H1 (cell line): ENCODE measurements at regions of chr11 and their contacts with region 1.

Region 1: DNA sequence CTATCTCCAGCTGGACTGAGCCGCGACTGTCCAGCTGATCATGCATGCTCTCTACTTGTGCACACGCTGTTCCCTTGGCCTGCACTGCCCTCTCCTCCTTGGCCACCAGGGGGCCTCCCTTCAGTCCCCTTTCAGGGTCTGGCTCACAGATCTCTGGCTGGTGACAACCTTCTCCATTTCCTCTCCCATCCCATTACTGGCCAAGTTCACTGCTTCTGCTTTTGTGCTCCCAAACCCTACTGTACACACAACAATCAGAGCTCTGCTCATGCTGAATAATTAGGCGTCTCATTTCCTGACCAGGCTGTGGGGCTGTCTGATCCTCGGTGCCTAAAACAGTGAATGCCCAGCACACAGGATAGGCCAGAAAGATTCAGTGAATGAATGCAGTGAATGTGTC is 224.0 kb upstream of the NARS2 start:
- DNase-seq: peak; percentile 34 to 86
- H3K4me3 ChIP-seq: no peak overlapping the region
- H3K27ac ChIP-seq: no peak overlapping the region
- H3K4me1 ChIP-seq: peaks cover 0 to 17% (median 10%) of the 10 kb centered on the region in 4 experiments; a peak in 5 of 7 replicates
- H3K27me3 ChIP-seq: no peaks in the 10 kb centered on the region
- CTCF ChIP-seq: peak; percentile 81 to 97 (median 95)
- EP300 ChIP-seq: no peak
- POLR2A ChIP-seq: no peak
- RAD21 ChIP-seq: peak; percentile 76 to 86

Region 2: DNA sequence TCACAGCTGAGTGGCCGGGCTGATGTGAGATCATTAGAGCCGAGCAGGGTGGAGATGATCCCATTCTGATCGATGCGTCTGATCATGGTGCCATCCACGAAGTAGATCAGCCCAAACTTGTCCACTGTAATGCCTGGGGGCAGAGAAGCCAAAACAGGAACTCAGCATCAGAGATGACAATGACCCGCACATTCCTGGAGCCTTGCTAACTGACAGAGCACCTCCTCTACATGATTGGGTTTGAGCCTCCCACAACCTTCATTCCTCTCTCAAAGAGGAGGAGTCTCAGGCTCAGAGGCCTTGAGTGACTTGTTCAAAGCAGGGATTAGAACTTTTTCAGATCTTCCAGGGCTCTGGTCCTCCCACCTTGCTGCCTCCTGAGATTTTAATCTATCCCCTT is 90.3 kb before region 1 on chr11:
- CTCF ChIA-PET with region 1: interaction called, 10 read pairs
- POLR2A ChIA-PET with region 1: no interaction called
- DNase-seq: no peak
- H3K4me3 ChIP-seq: no peak overlapping the region
- H3K27ac ChIP-seq: no peak overlapping the region
- H3K4me1 ChIP-seq: no peaks in the 10 kb centered on the region
- H3K27me3 ChIP-seq: no peaks in the 10 kb centered on the region
- CTCF ChIP-seq: no peak
- EP300 ChIP-seq: no peak
- POLR2A ChIP-seq: no peak
- RAD21 ChIP-seq: no peak

Region 3: DNA sequence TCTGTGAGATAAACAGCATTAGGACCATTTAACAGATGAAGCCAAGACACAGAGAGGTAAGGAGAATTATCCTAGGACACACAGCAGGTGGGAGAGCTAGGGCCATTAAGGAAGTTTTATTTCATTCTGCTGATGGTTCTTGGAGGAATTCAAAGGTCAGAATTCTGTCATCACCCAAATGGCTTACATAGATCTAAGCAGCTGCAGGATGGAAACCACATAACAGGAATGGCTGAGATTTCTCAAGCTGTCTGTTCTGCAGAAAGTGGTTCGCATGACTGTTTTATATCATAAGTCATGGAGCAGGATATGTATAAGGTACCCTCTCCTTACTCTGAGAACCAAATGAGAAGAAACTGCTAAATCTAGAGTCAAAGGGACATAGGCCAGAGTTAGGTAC is 60.8 kb before region 1 on chr11:
- CTCF ChIA-PET with region 1: interaction called, 11 read pairs
- POLR2A ChIA-PET with region 1: no interaction called
- DNase-seq: no peak
- H3K4me3 ChIP-seq: no peak overlapping the region
- H3K27ac ChIP-seq: no peak overlapping the region
- H3K4me1 ChIP-seq: no peaks in the 10 kb centered on the region
- H3K27me3 ChIP-seq: no peaks in the 10 kb centered on the region
- CTCF ChIP-seq: no peak
- EP300 ChIP-seq: no peak
- POLR2A ChIP-seq: no peak
- RAD21 ChIP-seq: no peak

Region 4: GRCh38 chr11:78784321-78785061 is 14.2 kb before region 1 on chr11:
- CTCF ChIA-PET with region 1: interaction called, 28 read pairs
- POLR2A ChIA-PET with region 1: no interaction called
- DNase-seq: no peak
- H3K4me3 ChIP-seq: no peak overlapping the region
- H3K27ac ChIP-seq: no peak overlapping the region
- H3K4me1 ChIP-seq: peaks cover 0 to 2% (median 0%) of the 10 kb centered on the region in 4 experiments; a peak in 1 of 7 replicates
- H3K27me3 ChIP-seq: no peaks in the 10 kb centered on the region
- CTCF ChIP-seq: no peak
- EP300 ChIP-seq: no peak
- POLR2A ChIP-seq: no peak
- RAD21 ChIP-seq: no peak

Region 5: DNA sequence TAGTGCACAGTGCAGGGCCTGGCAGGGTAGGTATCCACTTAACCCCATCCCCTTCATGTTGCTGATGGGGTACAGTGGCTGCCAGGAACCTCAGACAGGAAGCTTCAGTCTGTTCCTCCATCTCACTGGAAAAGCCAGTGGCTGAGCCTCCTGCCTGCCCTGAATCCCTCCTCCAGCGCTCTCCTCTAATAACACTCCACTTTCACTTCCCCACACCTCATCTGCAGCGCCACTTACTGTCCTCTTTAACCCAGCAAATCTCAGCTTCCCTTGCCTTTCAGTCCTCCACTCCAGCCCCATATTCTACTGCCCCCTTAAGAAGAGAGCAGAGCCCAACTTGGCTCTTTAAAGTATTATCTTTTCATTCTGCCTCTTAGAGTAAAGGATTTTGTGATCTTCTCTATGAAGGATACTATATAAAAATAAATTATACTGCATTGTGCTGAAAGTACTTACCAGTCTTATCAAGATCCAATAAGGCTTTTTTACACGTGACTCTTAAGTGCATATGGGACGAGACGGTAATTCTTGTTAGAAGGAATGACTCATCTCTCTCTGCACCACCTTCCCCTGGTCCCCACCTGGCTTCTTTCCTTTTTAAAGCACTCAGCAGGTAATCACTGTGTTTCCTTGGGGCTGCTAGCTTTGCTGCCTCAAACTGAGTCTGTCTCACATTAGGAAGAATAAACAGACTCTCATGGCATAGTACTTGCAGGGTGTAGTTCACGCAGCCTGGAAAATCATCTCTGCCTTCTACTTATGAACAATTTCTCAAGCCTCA is 14.0 kb after region 1 on chr11:
- CTCF ChIA-PET with region 1: interaction called, 100 read pairs
- POLR2A ChIA-PET with region 1: interaction called, 3 read pairs
- DNase-seq: no peak
- H3K4me3 ChIP-seq: peak overlapping the region in 1 of 4 experiments; percentile 21; a peak in 1 of 8 replicates
- H3K27ac ChIP-seq: no peak overlapping the region
- H3K4me1 ChIP-seq: peaks cover 5 to 21% (median 10%) of the 10 kb centered on the region in 4 experiments; a peak in 6 of 7 replicates
- H3K27me3 ChIP-seq: peaks cover 0 to 2% (median 0%) of the 10 kb centered on the region in 4 experiments; a peak in 1 of 7 replicates
- CTCF ChIP-seq: no peak; a peak in 1 of 4 replicates
- EP300 ChIP-seq: no peak
- POLR2A ChIP-seq: no peak
- RAD21 ChIP-seq: peak; percentile 10 to 25; a peak in 3 of 4 replicates

Region 6: GRCh38 chr11:78825591-78826020 is 26.9 kb after region 1 on chr11:
- CTCF ChIA-PET with region 1: interaction called, 25 read pairs
- POLR2A ChIA-PET with region 1: no interaction called
- DNase-seq: no peak
- H3K4me3 ChIP-seq: no peak overlapping the region
- H3K27ac ChIP-seq: no peak overlapping the region
- H3K4me1 ChIP-seq: peaks cover 0 to 5% (median 2%) of the 10 kb centered on the region in 4 experiments; a peak in 2 of 7 replicates
- H3K27me3 ChIP-seq: no peaks in the 10 kb centered on the region
- CTCF ChIP-seq: no peak
- EP300 ChIP-seq: no peak
- POLR2A ChIP-seq: no peak
- RAD21 ChIP-seq: no peak

Region 7: DNA sequence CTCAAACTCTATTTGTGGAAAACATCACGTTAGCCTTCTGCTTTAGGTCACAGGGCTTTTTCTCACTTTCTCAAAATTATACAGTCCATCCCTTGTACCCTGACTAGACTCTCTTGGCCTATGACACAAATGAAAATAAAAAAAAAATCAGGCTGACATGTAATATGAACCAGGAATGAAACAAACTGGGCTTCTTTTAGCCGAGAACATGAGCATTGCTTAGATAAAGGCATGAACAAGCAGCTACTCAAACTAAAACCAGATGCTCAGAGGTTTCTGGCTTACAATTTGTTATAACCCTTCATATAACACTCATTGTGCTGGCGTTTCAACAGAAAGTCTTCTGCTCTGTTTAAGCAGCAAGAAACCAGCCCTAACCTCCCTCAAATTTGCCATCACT is 41.5 kb after region 1 on chr11:
- CTCF ChIA-PET with region 1: interaction called, 28 read pairs
- POLR2A ChIA-PET with region 1: no interaction called
- DNase-seq: no peak
- H3K4me3 ChIP-seq: no peak overlapping the region
- H3K27ac ChIP-seq: no peak overlapping the region
- H3K4me1 ChIP-seq: no peaks in the 10 kb centered on the region
- H3K27me3 ChIP-seq: peaks cover 0 to 1% (median 0%) of the 10 kb centered on the region in 4 experiments; a peak in 1 of 7 replicates
- CTCF ChIP-seq: no peak
- EP300 ChIP-seq: no peak
- POLR2A ChIP-seq: no peak
- RAD21 ChIP-seq: no peak

Region 8: DNA sequence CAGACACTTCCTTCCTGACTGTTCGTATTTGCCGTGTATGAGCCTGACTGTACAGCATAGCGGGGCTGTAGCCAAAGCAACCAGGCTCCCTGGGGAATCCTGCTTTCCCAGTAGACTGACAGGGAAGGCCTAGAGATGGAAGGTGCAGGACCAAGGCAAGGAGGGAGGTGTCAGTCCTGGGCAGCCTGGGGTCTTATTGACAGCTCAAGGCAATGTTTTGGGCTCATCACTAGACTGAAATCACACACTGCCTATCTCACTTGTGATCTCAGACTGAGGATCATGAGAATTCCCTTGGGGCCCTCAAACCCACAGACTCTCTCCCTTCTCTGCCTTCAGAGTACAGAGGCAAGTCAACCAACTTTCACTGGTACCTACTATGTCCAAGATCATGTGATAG is 122.8 kb after region 1 on chr11:
- CTCF ChIA-PET with region 1: no interaction called
- POLR2A ChIA-PET with region 1: no interaction called
- DNase-seq: no peak
- H3K4me3 ChIP-seq: no peak overlapping the region
- H3K27ac ChIP-seq: no peak overlapping the region
- H3K4me1 ChIP-seq: no peaks in the 10 kb centered on the region
- H3K27me3 ChIP-seq: peaks cover 0 to 2% (median under 1%) of the 10 kb centered on the region in 4 experiments; a peak in 4 of 7 replicates
- CTCF ChIP-seq: no peak
- EP300 ChIP-seq: no peak
- POLR2A ChIP-seq: no peak
- RAD21 ChIP-seq: no peak